Left ventricle myocardium superior (tissue), 1 donor: ENCODE measurements at regions of chr12 and their contacts with region 1.

Region 1: DNA sequence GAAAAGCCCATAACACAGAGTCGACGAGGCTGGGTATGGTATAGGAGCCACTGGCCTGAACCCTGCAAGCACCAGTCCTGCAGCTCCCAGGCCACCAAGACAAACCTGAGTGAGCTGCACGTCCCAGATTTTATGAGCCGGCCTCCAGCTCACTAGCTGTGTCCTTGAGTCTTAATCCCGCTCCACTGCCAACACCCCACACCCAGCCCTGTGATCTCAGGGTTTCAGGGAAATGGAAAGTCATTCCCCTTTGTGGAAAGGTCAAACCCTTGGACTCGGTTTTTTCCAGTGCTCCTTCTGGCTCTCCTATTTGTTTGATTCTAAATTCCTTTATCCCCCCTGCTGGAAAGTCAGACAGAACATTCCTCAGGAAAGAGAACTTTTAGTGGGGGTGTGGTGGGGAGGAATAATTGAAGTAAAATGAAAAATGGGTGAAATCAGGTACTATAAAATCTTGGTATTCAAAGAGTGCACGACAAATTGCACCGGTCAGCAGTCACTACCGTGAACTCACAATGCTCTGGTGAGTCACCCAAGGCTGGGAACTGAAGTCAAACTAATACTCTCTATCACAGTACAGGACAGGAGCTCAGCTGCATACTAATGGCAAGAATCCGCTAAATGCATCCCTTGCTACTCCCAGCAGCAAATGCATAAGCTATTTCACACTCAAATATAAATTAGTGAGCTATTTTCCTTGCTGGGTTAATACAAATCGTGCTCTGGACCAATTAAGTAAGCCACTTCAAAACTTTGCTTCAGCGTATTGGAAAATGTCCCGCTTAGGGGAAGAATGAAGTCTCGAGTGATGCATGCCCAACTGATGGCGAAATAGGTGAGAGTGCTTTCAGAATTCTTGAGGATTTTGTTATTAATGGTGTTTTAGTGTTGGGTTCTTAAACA is 9.0 kb downstream of the PITPNM2 start:
- DNase-seq: peak; percentile 63
- ATAC-seq: peak; percentile 85

Region 2: GRCh38 chr12:122999196-122999950 is 142.5 kb before region 1 on chr12:
- intact Hi-C with region 1: no loop called
- DNase-seq: peak; percentile 15
- ATAC-seq: no peak

Region 3: DNA sequence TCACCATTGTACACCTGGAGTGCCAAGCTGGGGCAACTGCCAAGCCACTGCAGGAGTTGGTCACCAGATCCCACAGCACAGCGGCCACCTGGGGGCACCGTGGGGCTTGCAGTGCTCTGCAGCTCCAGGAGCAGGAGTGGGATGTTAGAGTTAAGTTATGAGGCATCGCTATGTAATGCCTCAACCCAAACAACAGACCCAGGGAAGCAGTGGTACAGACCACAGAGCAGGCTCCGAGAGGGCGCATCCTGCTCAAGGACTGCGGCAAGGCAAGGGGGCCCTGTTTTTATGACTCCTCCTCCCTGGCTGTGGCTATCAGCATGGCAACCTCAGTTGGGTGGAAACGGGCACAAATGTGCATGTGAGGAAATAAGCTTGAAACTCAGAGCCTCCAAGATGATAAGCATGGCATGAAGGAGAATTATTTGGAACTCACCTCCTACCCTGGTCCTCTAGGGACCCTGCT is 98.3 kb before region 1 on chr12:
- intact Hi-C with region 1: loop called (anchors 10 kb)
- DNase-seq: peak; percentile 93
- ATAC-seq: peak; percentile 95

Region 4: DNA sequence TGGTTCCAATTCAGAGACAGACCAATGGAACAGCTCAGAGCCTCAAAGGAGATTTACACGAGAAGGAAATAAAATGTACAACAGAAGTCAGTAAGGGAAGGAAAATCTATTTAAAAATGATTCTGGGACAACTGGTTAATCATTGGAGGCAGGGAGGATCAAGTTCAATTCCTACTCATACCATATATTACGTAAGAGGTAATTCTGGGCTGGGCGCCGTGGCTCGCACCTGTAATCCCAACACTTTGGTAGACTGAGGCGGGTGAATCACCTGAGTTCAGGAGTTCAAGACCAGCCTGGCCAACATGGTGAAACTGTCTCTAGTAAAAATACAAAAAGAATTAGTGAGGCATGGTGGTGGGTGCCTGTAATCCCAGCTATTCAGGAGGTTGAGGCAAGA is 45.8 kb after region 1 on chr12:
- intact Hi-C with region 1: no loop called
- DNase-seq: no peak
- ATAC-seq: no peak